ENCODE measurements at regions of chr1 and their contacts with region 1.

Region 1: GRCh38 chr1:16946646-16947045 is 24.9 kb downstream of the CROCC start:
- DNase-seq: no peak
- H3K4me3 ChIP-seq: no peak overlapping the region
- H3K27ac ChIP-seq: no peak overlapping the region
- H3K4me1 ChIP-seq: peaks cover 0 to 3% (median 2%) of the 10 kb centered on the region in 6 donors
- H3K27me3 ChIP-seq: no peaks in the 10 kb centered on the region
- CTCF ChIP-seq: no peak
- POLR2A ChIP-seq: no peak

Region 2: GRCh38 chr1:16621300-16621658 is 325.4 kb before region 1 on chr1:
- intact Hi-C with region 1: loop called (anchors 5 kb)
- DNase-seq: no peak
- H3K4me3 ChIP-seq: no peak overlapping the region
- H3K27ac ChIP-seq: no peak overlapping the region
- H3K4me1 ChIP-seq: peaks cover 0 to 6% (median 0%) of the 10 kb centered on the region in 6 donors
- H3K27me3 ChIP-seq: no peaks in the 10 kb centered on the region
- CTCF ChIP-seq: peak in 6 of 11 experiments; percentile 20 to 69 (median 52)
- POLR2A ChIP-seq: no peak

Region 3: DNA sequence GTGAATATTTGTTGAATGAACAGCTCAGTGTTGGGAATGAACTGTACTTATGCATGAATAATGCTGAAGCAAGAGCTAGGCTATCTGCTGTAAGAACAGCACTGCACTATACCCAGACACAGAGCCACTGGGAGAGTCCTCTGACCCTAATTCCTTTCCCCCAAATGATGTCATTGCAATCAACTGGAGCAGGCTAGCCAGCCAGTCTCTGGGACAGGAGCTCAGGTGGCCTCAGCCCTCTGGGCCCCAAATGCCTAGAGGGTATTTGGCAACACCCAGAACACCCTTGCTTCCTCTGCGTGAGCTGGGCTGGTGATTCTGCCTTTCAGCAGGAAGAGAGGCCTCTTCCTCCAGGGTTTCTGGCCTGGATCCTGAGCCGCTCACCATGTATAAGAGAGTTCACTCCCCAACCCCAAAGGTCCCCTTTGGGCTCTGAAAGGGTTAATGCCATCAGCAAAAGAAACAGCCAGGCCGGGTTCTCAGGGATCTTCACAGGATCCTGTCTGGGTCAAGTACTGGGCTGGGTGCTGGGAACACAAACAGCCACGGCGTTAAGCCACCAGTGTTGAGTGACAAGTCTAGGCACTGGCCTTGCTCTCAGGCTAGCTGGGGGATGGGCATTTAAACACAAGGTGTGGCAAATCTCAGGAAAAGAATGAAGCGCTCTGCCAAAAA is 357.6 kb after region 1 on chr1:
- intact Hi-C with region 1: no loop called
- DNase-seq: peak; percentile 61
- H3K4me3 ChIP-seq: peak overlapping the region in 1 of 8 donors; percentile 21
- H3K27ac ChIP-seq: peak overlapping the region in 6 of 8 donors; percentile 35 to 82 (median 76)
- H3K4me1 ChIP-seq: peaks cover 0 to 43% (median 0%) of the 10 kb centered on the region in 6 donors
- H3K27me3 ChIP-seq: peaks cover 0 to 37% (median 10%) of the 10 kb centered on the region in 7 donors
- CTCF ChIP-seq: no peak
- POLR2A ChIP-seq: no peak

Region 4: GRCh38 chr1:18429654-18430053 is 1483.0 kb after region 1 on chr1:
- intact Hi-C with region 1: no loop called
- DNase-seq: no peak
- H3K4me3 ChIP-seq: no peak overlapping the region
- H3K27ac ChIP-seq: no peak overlapping the region
- H3K4me1 ChIP-seq: no peaks in the 10 kb centered on the region
- H3K27me3 ChIP-seq: peaks cover 0 to 12% (median 0%) of the 10 kb centered on the region in 7 donors
- CTCF ChIP-seq: no peak
- POLR2A ChIP-seq: no peak